Naive thymus-derived CD4-positive, alpha-beta T cell (primary cell): ENCODE measurements at regions of chr5 and their contacts with region 1.

Region 1: DNA sequence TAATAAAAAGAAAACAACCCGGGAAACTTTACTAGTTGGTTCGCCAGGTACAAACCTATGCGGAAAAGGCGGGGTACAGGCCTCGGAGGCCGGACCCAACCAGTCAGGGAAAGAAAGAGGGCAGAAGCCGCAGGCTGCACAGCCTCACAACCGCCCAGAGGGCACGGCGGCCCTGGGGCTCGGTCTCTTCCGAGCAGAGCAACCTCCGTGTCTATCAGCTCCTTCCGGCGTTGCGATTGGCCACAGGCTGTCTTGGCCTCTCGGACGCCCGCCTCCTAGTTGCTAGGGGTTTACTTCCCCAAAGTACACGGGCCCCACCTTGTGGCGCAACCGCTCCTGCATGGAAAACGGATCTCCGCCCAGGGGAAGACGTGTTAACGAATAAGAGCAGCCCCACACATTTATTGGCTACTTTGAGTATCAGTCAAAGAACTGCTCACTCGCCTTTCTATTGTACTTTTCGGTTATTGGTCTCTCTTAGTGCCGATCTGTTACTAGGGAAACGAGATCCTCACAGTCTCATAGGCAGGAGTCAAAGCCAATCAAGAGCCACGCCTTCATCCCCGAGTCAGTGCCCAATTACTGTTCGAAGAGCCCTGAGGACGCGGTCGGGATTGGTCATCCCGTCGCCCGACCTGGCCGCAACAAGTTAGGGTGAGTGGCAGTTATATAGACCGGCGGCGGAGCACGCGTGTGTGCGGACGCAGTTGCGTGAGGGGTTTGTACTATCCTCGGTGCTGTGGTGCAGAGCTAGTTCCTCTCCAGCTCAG is at the start of gene G3BP1:
- DNase-seq: peak; percentile 86 to 100 (median 99)
- ATAC-seq: peak; percentile 86
- H3K4me3 ChIP-seq: peak within 1 kb of the TSS; percentile 93
- H3K4me3 Mint-ChIP-seq: peak within 1 kb of the TSS in 7 of 10 donors; percentile 89 to 97 (median 94)
- H3K27ac ChIP-seq: peak within 1 kb of the TSS; percentile 87
- H3K27ac Mint-ChIP-seq: peak within 1 kb of the TSS in 5 of 9 donors; percentile 79 to 94 (median 87)
- H3K4me1 ChIP-seq: peaks cover 31 to 39% of the 10 kb centered on the region in 2 donors
- H3K4me1 Mint-ChIP-seq: peaks cover 24 to 55% (median 43%) of the 10 kb centered on the region in 7 donors
- H3K27me3 ChIP-seq: no peaks in the 10 kb centered on the region
- H3K27me3 Mint-ChIP-seq: no peaks in the 10 kb centered on the region
- total RNA-seq, gene G3BP1: 86.1 to 244 (median 167) TPM

Region 2: DNA sequence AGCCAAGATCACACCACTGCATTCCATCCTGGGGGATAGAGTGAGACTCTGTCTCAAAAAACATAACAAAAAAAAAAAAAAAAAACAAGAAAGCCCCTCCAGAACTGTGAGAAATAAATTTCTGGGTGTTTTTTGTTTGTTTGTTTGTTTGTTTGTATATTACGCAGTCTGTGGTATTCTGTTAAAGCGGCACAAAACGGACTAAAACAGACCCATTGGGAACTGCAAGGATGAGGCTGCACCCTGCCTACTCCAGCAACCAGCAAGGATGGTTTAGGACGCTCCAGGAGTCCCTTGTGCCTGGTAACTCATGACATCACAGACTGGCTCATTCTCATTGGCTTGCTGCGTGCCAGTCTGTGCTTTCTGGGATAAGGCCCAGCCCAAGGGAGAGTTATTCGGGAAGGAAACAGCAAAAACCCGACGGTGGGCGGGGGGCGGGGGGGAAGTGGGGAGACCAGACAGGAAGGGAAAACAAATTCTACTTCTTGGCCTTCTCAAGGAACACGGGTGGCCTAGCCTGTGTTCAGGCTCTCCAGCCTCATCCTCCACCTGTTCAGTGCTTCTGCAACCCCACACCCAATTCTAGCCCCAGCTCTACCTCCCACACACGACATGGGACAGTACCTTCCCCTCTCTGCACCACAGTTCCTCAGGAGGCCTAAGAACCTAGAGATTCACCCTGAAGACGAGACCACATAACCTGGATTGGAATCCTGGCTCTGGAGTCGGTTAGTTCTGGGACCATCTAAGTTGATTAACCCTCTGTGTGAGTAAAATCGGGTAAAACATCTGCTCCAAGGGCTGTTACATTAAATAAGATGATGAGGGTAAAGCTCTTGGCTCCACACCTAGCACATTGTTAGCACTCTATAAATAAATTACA is 1361.6 kb before region 1 on chr5:
- CTCF ChIA-PET with region 1: interaction called, 3 read pairs
- POLR2A ChIA-PET with region 1: interaction called, 5 read pairs
- intact Hi-C with region 1: loop called (anchors 2 to 5 kb)
- DNase-seq: peak in 7 of 9 donors; percentile 27 to 48 (median 43)
- ATAC-seq: no peak
- H3K4me3 ChIP-seq: peak overlapping the region; percentile 83
- H3K4me3 Mint-ChIP-seq: peak overlapping the region; percentile 91 to 100 (median 98)
- H3K27ac ChIP-seq: peak overlapping the region; percentile 98
- H3K27ac Mint-ChIP-seq: peak overlapping the region; percentile 96 to 100 (median 100)
- H3K4me1 ChIP-seq: peaks cover 32 to 35% of the 10 kb centered on the region in 2 donors
- H3K4me1 Mint-ChIP-seq: peaks cover 24 to 52% (median 38%) of the 10 kb centered on the region in 7 donors
- H3K27me3 ChIP-seq: no peaks in the 10 kb centered on the region
- H3K27me3 Mint-ChIP-seq: no peaks in the 10 kb centered on the region

Region 3: DNA sequence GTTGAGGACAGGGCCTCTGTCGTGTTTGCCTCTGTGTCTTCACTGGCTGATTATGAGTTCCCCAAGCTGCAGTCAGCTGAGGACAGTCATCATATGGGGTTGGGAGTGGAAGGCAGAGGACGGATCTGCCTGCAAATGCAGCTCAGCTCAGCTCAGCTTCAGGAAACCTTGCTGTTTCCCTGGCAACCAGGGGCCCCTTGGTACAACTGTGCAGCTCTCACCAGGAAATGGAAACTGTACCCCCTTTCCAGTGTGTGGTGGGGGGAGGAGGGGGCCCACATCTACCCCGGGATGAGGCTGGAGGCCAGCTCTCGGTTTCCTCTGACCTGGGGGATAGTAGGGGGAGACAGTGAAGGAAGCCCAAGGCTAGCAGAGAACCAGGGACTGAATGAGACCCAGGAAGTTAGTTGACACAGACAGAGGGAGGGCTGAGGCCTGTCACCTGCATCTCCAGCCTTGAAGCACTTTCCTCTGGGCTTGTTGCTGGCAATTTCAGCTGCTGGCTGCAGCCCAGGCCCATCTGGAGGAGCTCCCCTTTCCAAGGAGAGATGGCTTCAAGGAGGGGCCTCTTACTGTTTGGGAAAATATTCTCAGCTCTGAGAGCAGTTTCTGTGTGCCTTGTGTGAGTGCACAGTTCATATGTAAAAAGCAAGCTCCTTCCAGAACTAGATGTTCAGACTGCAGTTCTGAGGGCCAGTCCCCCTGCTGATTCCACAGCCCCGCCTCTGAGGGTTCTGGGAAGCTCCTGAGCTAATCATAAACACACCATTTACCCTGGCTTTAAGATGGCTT is 620.8 kb before region 1 on chr5:
- CTCF ChIA-PET with region 1: no interaction called
- POLR2A ChIA-PET with region 1: no interaction called
- intact Hi-C with region 1: loop called in 1 of 2 experiments (anchors 2 kb)
- DNase-seq: peak; percentile 39 to 93 (median 83)
- ATAC-seq: peak; percentile 89
- H3K4me3 ChIP-seq: peak overlapping the region; percentile 44
- H3K4me3 Mint-ChIP-seq: peak overlapping the region; percentile 70 to 97 (median 86)
- H3K27ac ChIP-seq: peak overlapping the region; percentile 92
- H3K27ac Mint-ChIP-seq: peak overlapping the region; percentile 91 to 99 (median 97)
- H3K4me1 ChIP-seq: peaks cover 93 to 99% of the 10 kb centered on the region in 2 donors
- H3K4me1 Mint-ChIP-seq: peaks cover 80 to 100% (median 96%) of the 10 kb centered on the region in 7 donors
- H3K27me3 ChIP-seq: no peaks in the 10 kb centered on the region
- H3K27me3 Mint-ChIP-seq: no peaks in the 10 kb centered on the region

Region 4: DNA sequence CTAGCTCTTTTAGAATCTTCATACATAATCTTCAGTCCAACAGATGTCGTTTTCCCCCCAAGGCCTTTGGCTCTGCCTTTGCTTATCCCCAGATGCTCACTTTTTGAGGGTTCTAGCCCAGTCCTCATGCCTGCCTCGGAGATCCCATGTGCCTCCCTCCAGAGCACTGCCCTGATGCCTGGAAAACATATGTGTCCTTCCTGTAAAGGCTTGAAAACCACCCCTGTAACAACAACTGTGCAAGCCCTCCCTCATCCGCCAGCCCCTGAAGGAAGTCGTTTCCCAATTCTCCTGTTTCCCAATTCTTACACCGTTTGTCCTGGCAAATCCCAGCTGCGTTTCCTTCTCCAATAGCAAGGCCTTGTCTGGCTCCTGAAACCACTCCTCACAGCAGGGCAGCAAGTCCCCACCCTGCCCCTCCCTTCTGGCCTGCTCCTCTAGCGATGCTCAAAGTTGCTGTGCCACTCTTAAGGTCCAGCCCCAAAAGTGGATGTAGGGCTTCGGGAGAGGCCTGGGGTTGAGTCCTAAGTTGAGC is 271.9 kb before region 1 on chr5:
- CTCF ChIA-PET with region 1: no interaction called
- POLR2A ChIA-PET with region 1: no interaction called
- intact Hi-C with region 1: loop called in 1 of 2 experiments (anchors 2 kb)
- DNase-seq: no peak
- ATAC-seq: no peak
- H3K4me3 ChIP-seq: no peak overlapping the region
- H3K4me3 Mint-ChIP-seq: no peak overlapping the region
- H3K27ac ChIP-seq: no peak overlapping the region
- H3K27ac Mint-ChIP-seq: peak overlapping the region in 2 of 9 donors; percentile 17 to 31
- H3K4me1 ChIP-seq: no peaks in the 10 kb centered on the region
- H3K4me1 Mint-ChIP-seq: peaks cover 5 to 6% (median 6%) of the 10 kb centered on the region in 7 donors
- H3K27me3 ChIP-seq: no peaks in the 10 kb centered on the region
- H3K27me3 Mint-ChIP-seq: no peaks in the 10 kb centered on the region

Region 5: GRCh38 chr5:151758430-151759241 is 12.8 kb before region 1 on chr5 and contains the start of gene ATOX1:
- CTCF ChIA-PET with region 1: interaction called, 4 read pairs
- POLR2A ChIA-PET with region 1: interaction called, 232 read pairs
- intact Hi-C with region 1: loop called (anchors 1 kb)
- DNase-seq: peak; percentile 85 to 93 (median 89)
- ATAC-seq: peak; percentile 100
- H3K4me3 ChIP-seq: peak within 1 kb of the TSS; percentile 94
- H3K4me3 Mint-ChIP-seq: peak within 1 kb of the TSS; percentile 88 to 99 (median 94)
- H3K27ac ChIP-seq: peak within 1 kb of the TSS; percentile 94
- H3K27ac Mint-ChIP-seq: peak within 1 kb of the TSS; percentile 88 to 98 (median 94)
- H3K4me1 ChIP-seq: peaks cover 14 to 20% of the 10 kb centered on the region in 2 donors
- H3K4me1 Mint-ChIP-seq: peaks cover 16 to 50% (median 39%) of the 10 kb centered on the region in 7 donors
- H3K27me3 ChIP-seq: no peaks in the 10 kb centered on the region
- H3K27me3 Mint-ChIP-seq: peaks cover 0 to 3% (median 0%) of the 10 kb centered on the region in 5 donors
- total RNA-seq, gene ATOX1: 14.8 to 58.2 (median 29.6) TPM